Lower leg skin (tissue), 4 donors: ENCODE measurements at regions of chr2 and their contacts with region 1.

Region 1: GRCh38 chr2:212227755-212228154 is 310.8 kb downstream of the ERBB4 start:
- DNase-seq: peak in 1 of 2 donors; percentile 21
- H3K4me3 ChIP-seq: no peak overlapping the region
- CTCF ChIP-seq: no peak
- POLR2A ChIP-seq: no peak

Region 2: DNA sequence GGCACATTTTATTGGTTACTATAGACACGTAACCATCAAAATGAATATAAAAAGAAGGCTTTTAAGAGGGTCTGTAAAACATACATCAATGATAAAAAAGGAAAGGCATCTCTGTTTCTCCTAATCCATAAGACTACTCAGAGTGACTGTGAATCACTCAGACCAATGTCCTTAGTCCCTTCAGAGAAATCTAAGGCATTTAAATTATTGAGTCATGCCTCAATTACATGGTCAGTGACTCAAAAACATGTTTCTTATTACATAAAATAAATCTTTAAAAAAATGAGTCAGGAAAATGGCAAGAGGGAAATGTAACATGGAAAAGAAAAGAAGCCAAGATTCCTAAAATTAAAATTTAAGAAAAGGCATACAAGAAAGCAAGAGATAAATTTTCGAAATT is 164.3 kb after region 1 on chr2:
- intact Hi-C with region 1: loop called (anchors 2 kb)
- DNase-seq: no peak
- H3K4me3 ChIP-seq: no peak overlapping the region
- CTCF ChIP-seq: no peak
- POLR2A ChIP-seq: no peak